ENCODE measurements at regions of chr6 and their contacts with region 1.

Region 1: GRCh38 chr6:35731736-35732532 is 4.9 kb upstream of the ARMC12 start:
- DNase-seq: peak; percentile 86
- H3K4me3 ChIP-seq: peak overlapping the region; percentile 75
- H3K27ac ChIP-seq: peak overlapping the region; percentile 67
- H3K4me1 ChIP-seq: peaks cover 17% of the 10 kb centered on the region; the same call in 1 of the 2 replicates
- H3K27me3 ChIP-seq: no peaks in the 10 kb centered on the region

Region 2: DNA sequence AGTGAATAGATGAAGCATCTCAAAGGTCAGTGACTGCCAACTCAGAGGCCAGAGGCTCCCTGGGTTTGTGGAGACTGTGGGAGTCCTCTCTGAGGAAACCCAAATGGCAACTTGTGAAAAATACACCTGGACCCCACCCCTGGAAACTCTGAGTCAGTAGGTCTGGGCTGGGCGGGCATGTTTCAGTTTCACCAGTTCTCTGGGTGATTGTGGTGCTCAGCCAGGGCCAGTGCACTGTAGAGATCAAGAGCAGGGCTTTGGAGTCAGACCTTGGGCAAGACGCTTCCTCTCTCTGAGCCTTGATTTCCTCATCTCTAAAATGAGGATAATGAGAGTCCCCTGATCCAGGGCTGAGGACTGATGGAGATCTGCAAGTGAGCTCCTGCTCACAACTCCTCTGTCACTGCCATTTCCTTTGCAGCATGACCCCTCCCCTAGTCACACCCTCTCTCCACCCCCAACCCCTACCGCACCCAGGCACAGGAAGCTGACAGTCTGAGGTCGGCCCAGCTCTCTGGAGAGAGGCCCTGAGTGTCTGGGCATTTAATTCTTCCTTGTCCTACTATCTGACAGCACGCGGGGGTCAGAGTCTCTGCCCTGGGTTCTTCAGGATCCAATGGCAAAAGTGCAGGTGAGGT is 429.2 kb before region 1 on chr6:
- in situ Hi-C with region 1: loop called (anchors 25 kb)
- DNase-seq: peak; percentile 8
- H3K4me3 ChIP-seq: no peak overlapping the region
- H3K27ac ChIP-seq: no peak overlapping the region
- H3K4me1 ChIP-seq: no peaks in the 10 kb centered on the region
- H3K27me3 ChIP-seq: no peaks in the 10 kb centered on the region

Region 3: GRCh38 chr6:35583893-35584688 is 147.8 kb before region 1 on chr6:
- in situ Hi-C with region 1: loop called (anchors 5 kb)
- DNase-seq: peak; percentile 76
- H3K4me3 ChIP-seq: no peak overlapping the region
- H3K27ac ChIP-seq: no peak overlapping the region
- H3K4me1 ChIP-seq: peaks cover 27% of the 10 kb centered on the region
- H3K27me3 ChIP-seq: no peaks in the 10 kb centered on the region

Measured in GM23248 (cell line).